Endothelial cell of umbilical vein (primary cell): ENCODE measurements at regions of chr10 and their contacts with region 1.

Region 1: GRCh38 chr10:89327784-89328441 is at the start of gene IFIT3:
- DNase-seq: peak; percentile 95
- H3K4me3 ChIP-seq: peak within 1 kb of the TSS; percentile 24 to 80 (median 39)
- H3K27ac ChIP-seq: peak within 1 kb of the TSS; percentile 88
- H3K4me1 ChIP-seq: peaks cover 21% of the 10 kb centered on the region
- H3K27me3 ChIP-seq: no peaks in the 10 kb centered on the region
- CTCF ChIP-seq: no peak
- POLR2A ChIP-seq: peak; percentile 19
- total RNA-seq, gene IFIT3: 2.6 and 3.1 TPM in 2 replicates

Region 2: DNA sequence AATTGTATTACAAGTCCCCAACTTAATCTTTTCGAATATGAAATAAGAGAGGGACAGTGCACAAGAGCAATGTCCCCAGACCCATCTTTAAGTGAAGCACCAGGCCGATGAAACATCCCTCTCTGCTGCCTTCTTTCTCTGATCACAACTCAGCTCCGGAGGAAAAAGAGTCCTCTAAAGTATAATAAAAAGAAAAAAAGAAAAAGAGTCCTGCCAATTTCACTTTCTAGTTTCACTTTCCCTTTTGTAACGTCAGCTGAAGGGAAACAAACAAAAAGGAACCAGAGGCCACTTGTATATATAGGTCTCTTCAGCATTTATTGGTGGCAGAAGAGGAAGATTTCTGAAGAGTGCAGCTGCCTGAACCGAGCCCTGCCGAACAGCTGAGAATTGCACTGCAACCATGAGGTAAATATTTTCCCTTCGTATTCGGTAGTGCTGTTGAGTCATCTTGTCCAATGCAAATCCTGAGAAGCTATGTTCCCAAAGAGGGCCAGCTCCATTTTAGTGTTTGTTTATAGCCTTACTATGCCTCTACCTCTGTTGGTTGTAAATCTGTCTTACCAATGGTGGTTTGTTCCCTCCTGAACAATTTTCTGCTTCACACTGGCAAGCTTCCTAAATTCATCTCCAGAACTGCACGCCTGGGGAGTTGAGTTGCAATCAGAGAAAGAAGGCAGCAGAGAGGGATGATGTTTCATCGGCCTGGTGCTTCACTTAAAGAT is 26.0 kb before region 1 on chr10 and contains the start of gene IFIT2:
- CTCF ChIA-PET with region 1: interaction called, 5 read pairs
- POLR2A ChIA-PET with region 1: no interaction called
- dilution Hi-C with region 1: no loop called
- intact Hi-C with region 1: loop called (anchors 2 kb)
- DNase-seq: peak; percentile 87
- H3K4me3 ChIP-seq: peak within 1 kb of the TSS; percentile 34 to 91 (median 71)
- H3K27ac ChIP-seq: peak within 1 kb of the TSS; percentile 33
- H3K4me1 ChIP-seq: peaks cover 10% of the 10 kb centered on the region
- H3K27me3 ChIP-seq: peaks cover 15 to 22% of the 10 kb centered on the region in 2 experiments
- CTCF ChIP-seq: no peak
- POLR2A ChIP-seq: no peak
- total RNA-seq, gene IFIT2: 0.51 and 1.4 TPM in 2 replicates

Region 3: GRCh38 chr10:89360157-89360556 is 32.2 kb after region 1 on chr10:
- CTCF ChIA-PET with region 1: no interaction called
- POLR2A ChIA-PET with region 1: no interaction called
- dilution Hi-C with region 1: no loop called
- intact Hi-C with region 1: no loop called
- DNase-seq: no peak
- H3K4me3 ChIP-seq: no peak overlapping the region
- H3K27ac ChIP-seq: no peak overlapping the region
- H3K4me1 ChIP-seq: no peaks in the 10 kb centered on the region
- H3K27me3 ChIP-seq: peaks cover 11 to 25% of the 10 kb centered on the region in 2 experiments
- CTCF ChIP-seq: no peak
- POLR2A ChIP-seq: no peak